ENCODE measurements at regions of chr12 and their contacts with region 1.

Region 1: GRCh38 chr12:118237052-118237665 is 101.2 kb downstream of the PEBP1 start:
- DNase-seq: no peak
- H3K4me3 Mint-ChIP-seq: no peak overlapping the region
- H3K27ac Mint-ChIP-seq: no peak overlapping the region
- H3K4me1 Mint-ChIP-seq: peaks cover 14% of the 10 kb centered on the region
- H3K27me3 Mint-ChIP-seq: no peaks in the 10 kb centered on the region
- CTCF ChIP-seq: no peak

Region 2: DNA sequence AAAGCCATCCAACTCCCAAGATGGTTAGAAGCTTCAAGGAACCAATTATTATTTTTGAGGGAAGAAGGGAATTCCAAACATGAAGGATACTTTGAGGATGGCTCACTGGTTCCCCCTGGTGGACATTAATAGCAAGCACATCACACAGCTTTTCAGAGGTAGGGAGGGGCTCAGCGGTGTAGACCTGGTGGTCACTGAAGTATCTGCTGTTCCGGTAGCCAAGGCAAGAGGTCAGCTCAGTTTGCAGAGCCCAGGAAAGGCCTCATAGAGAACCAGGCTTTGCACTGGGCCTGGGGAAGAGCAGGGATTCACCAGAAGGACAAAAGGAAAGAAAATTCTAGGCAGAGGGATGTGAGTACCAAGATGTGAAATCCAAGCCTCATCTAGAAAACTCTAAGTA is 387.1 kb before region 1 on chr12:
- CTCF ChIA-PET with region 1: no interaction called
- intact Hi-C with region 1: no loop called
- DNase-seq: peak; percentile 49
- H3K4me3 Mint-ChIP-seq: no peak overlapping the region
- H3K27ac Mint-ChIP-seq: no peak overlapping the region
- H3K4me1 Mint-ChIP-seq: peaks cover 25% of the 10 kb centered on the region
- H3K27me3 Mint-ChIP-seq: peaks cover 24% of the 10 kb centered on the region
- CTCF ChIP-seq: peak; percentile 81

Region 3: DNA sequence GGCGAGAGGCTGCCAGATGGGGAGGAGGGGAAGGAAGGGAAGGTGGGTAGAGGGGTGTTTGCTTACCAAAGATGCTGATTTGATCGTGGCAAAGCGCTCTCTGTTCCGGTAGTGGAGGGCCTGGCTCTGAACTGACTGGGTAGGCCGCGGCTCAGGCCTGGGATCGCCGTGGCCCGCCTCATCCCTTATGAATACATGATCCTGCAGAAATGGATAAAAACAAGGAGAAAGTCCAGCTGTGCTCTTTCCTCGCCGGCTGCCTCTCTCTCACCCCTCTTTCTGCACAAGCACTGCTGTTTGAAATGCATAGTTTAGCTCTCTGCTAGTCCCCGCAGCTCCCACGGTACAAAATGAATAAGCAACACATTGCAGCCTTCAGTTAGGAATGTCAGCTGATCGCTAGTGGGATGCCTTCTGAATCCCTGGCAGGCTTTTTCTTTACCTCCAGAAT is 47.4 kb before region 1 on chr12:
- CTCF ChIA-PET with region 1: no interaction called
- intact Hi-C with region 1: loop called (anchors 5 kb)
- DNase-seq: no peak
- H3K4me3 Mint-ChIP-seq: no peak overlapping the region
- H3K27ac Mint-ChIP-seq: no peak overlapping the region
- H3K4me1 Mint-ChIP-seq: peaks cover 23% of the 10 kb centered on the region
- H3K27me3 Mint-ChIP-seq: no peaks in the 10 kb centered on the region
- CTCF ChIP-seq: no peak

Region 4: GRCh38 chr12:118271790-118272417 is 34.7 kb after region 1 on chr12:
- CTCF ChIA-PET with region 1: no interaction called
- intact Hi-C with region 1: loop called (anchors 5 kb)
- DNase-seq: peak; percentile 65
- H3K4me3 Mint-ChIP-seq: peak overlapping the region; percentile 55
- H3K27ac Mint-ChIP-seq: peak overlapping the region; percentile 90
- H3K4me1 Mint-ChIP-seq: peaks cover 42% of the 10 kb centered on the region
- H3K27me3 Mint-ChIP-seq: no peaks in the 10 kb centered on the region
- CTCF ChIP-seq: no peak